ENCODE measurements at regions of chr5 and their contacts with region 1.

Region 1: DNA sequence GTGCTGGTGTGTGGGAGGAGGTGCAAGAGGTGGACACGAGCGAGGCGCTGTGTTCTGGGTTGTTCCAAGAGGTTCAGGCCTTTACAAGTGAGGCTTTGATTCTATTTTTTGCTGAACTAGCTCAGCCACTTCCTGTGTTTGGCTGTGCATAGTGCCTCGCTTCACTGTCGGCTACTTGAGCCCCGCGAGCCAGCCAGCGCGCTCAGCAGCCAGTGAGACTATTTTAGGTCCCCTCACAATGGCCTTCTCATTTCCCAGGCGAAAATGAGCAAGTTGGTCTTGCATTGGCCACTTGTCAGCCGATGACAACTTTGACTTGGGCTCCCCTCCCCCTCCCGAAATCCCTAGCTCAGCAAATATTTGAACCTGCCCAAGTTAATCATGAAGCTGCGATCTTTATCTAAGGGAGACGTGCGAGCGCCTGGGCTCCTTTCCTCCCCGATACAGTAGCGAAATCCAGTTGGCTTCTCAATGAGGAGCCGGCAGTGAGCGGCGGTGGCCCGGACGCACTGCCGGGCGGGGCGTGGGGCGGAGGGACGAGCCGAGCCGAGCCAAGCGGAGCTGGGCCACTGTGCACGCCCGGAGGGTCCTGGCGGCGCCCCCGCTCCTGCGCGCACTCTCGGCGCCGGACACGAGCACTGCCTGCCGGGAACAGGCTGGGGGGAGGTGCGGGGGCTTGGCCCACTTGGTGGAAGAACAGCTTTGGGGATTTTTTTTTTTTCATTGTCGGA is 72.6 kb downstream of the PIK3R1 start:
- DNase-seq: peak; percentile 63
- ATAC-seq: peak; percentile 79
- H3K4me3 Mint-ChIP-seq: peak overlapping the region; percentile 82
- H3K27ac Mint-ChIP-seq: peak overlapping the region; percentile 92
- H3K4me1 Mint-ChIP-seq: peaks cover 85% of the 10 kb centered on the region
- H3K27me3 Mint-ChIP-seq: no peaks in the 10 kb centered on the region

Region 2: GRCh38 chr5:68215208-68215897 is 72.8 kb before region 1 on chr5 and contains the start of gene PIK3R1:
- CTCF ChIA-PET with region 1: interaction called, 12 read pairs
- POLR2A ChIA-PET with region 1: no interaction called
- intact Hi-C with region 1: no loop called
- DNase-seq: peak; percentile 96
- ATAC-seq: peak; percentile 85
- H3K4me3 Mint-ChIP-seq: peak within 1 kb of the TSS; percentile 83
- H3K27ac Mint-ChIP-seq: peak within 1 kb of the TSS; percentile 97
- H3K4me1 Mint-ChIP-seq: peaks cover 45% of the 10 kb centered on the region
- H3K27me3 Mint-ChIP-seq: no peaks in the 10 kb centered on the region
- total RNA-seq, gene PIK3R1: 40.0 to 49.0 TPM

Region 3: GRCh38 chr5:68272289-68272688 is 15.9 kb before region 1 on chr5:
- CTCF ChIA-PET with region 1: interaction called, 43 read pairs
- POLR2A ChIA-PET with region 1: no interaction called
- intact Hi-C with region 1: no loop called
- DNase-seq: no peak
- ATAC-seq: no peak
- H3K4me3 Mint-ChIP-seq: no peak overlapping the region
- H3K27ac Mint-ChIP-seq: no peak overlapping the region
- H3K4me1 Mint-ChIP-seq: peaks cover 81% of the 10 kb centered on the region
- H3K27me3 Mint-ChIP-seq: no peaks in the 10 kb centered on the region

Region 4: DNA sequence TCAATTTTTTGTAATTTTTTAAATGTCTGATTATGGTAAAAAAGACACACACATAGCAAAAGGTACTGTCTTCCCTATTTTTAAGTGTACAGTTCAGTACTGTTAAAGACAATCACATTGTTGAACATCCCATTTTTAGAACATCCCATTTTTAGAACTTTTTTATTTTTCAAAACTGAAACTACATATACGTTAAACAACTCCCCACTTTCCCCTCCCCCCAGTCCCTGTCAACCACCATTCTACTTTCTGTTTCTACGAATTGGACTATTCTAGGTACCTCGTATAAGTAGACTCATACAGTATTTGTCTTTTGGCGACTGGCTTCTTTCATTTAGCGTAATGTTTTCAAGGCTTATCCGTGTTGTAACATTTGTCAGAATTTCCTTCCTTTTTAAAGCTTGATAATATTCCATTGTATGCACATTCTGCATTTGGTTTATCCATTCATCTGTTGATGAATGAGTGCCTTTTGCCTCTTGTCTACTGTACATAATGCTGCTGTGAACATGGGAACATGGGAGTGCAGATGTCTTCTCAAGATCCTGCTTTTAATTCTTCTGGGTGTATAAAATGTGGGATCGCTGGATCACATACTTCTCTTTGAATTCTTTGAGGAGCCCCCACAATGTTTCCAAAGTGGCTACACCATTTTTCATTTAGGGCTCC is 81.5 kb after region 1 on chr5:
- CTCF ChIA-PET with region 1: interaction called, 4 read pairs
- POLR2A ChIA-PET with region 1: no interaction called
- intact Hi-C with region 1: loop called in 1 of 2 experiments (anchors 5 kb)
- DNase-seq: peak; percentile 72
- ATAC-seq: peak; percentile 88
- H3K4me3 Mint-ChIP-seq: peak overlapping the region; percentile 24
- H3K27ac Mint-ChIP-seq: peak overlapping the region; percentile 16
- H3K4me1 Mint-ChIP-seq: peaks cover 36% of the 10 kb centered on the region
- H3K27me3 Mint-ChIP-seq: no peaks in the 10 kb centered on the region

Region 5: GRCh38 chr5:68460147-68460798 is 172.1 kb after region 1 on chr5:
- CTCF ChIA-PET with region 1: interaction called, 36 read pairs
- POLR2A ChIA-PET with region 1: no interaction called
- intact Hi-C with region 1: loop called (anchors 1 kb)
- DNase-seq: peak; percentile 53
- ATAC-seq: no peak
- H3K4me3 Mint-ChIP-seq: no peak overlapping the region
- H3K27ac Mint-ChIP-seq: no peak overlapping the region
- H3K4me1 Mint-ChIP-seq: peaks cover 18% of the 10 kb centered on the region
- H3K27me3 Mint-ChIP-seq: no peaks in the 10 kb centered on the region

Region 6: GRCh38 chr5:68745448-68745847 is 457.3 kb after region 1 on chr5:
- CTCF ChIA-PET with region 1: no interaction called
- POLR2A ChIA-PET with region 1: no interaction called
- intact Hi-C with region 1: loop called in 1 of 2 experiments (anchors 2 kb)
- DNase-seq: peak; percentile 13
- ATAC-seq: no peak
- H3K4me3 Mint-ChIP-seq: no peak overlapping the region
- H3K27ac Mint-ChIP-seq: no peak overlapping the region
- H3K4me1 Mint-ChIP-seq: no peaks in the 10 kb centered on the region
- H3K27me3 Mint-ChIP-seq: no peaks in the 10 kb centered on the region

Region 7: DNA sequence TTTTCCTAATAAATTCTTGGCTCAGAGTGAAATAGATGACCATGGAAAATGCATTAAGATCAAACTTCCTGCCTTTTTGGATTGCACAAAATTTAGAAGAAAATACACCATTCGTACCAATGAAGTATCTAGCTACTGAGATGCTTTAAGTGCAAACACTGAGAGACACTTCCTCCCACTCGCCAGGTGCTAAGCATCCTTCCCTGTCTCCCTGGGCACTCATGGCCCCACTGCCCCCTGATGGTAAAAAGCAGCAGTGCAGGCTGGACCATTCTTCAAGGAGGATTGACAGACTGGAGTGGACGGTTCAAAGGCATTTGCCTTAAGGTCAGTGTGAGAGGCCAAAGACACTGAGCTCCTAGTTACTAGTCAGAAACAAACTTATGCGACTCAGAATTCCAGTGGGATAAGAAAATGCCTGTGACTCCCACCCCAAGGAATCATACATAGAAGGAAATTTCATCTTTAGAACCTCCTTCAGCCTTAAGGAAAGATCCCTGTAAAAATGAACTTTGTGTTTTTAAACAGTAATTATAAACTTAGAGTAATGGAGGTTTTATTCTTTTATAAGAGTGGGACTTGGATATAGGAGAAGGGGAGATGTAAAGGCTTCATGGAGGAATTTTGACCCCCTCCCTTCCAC is 719.7 kb after region 1 on chr5:
- CTCF ChIA-PET with region 1: interaction called, 3 read pairs
- POLR2A ChIA-PET with region 1: no interaction called
- intact Hi-C with region 1: loop called (anchors 1 to 5 kb)
- DNase-seq: peak; percentile 85
- ATAC-seq: peak; percentile 68
- H3K4me3 Mint-ChIP-seq: no peak overlapping the region
- H3K27ac Mint-ChIP-seq: no peak overlapping the region
- H3K4me1 Mint-ChIP-seq: no peaks in the 10 kb centered on the region
- H3K27me3 Mint-ChIP-seq: peaks cover 25% of the 10 kb centered on the region